ENCODE measurements at regions of chr20 and their contacts with region 1.

Region 1: GRCh38 chr20:19828232-19828631 is 70.2 kb downstream of the RIN2 start:
- H3K4me3 ChIP-seq: no peak overlapping the region
- H3K27ac ChIP-seq: no peak overlapping the region
- H3K4me1 ChIP-seq: no peaks in the 10 kb centered on the region
- CTCF ChIP-seq: no peak

Region 2: DNA sequence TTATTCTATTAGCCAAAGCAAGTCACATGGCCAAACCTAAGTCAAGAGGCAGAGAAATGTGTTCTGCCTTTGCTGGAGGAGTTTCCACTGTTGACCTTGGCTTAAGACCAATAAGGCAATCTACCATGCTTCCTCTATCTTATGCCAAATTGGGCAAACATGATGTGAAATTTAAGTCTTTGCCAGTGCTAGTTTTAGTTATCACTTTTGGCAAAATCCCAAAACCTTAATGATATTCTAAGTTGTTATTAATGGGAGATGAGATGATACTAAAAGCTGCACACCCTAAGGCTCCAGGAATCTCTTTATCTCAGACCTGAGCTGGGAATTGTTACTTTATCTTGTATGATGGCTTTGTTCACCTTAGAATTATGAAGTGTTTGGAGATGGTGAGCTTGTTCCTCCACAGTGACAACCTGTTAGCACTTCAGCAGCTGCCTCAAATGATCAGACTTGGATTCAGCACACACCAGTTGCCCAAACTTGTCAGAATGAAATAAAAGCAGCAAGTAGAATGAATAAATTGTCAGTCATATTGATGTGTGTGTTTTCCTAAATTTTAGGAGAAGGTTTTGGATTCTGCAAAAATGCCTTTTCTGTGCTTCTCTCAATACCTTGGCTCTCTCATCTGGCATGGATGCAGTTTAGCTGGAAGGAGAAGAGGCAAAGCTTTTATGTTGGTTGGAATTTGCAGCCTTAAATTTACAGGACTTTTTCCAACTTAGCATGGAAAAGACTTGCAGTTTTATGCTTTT is 20.9 kb before region 1 on chr20:
- CTCF ChIA-PET with region 1: interaction called, 11 read pairs
- POLR2A ChIA-PET with region 1: no interaction called
- H3K4me3 ChIP-seq: no peak overlapping the region
- H3K27ac ChIP-seq: peak overlapping the region; percentile 56
- H3K4me1 ChIP-seq: peaks cover 13% of the 10 kb centered on the region
- CTCF ChIP-seq: no peak

Measured in HEK293 (cell line).